ENCODE measurements at regions of chr19 and their contacts with region 1.

Region 1: GRCh38 chr19:10269333-10270179 is 1.4 kb upstream of the ICAM1 start:
- DNase-seq: peak; percentile 81 to 87 (median 85)
- H3K4me3 ChIP-seq: peak overlapping the region; percentile 47 to 82
- H3K4me3 Mint-ChIP-seq: peak overlapping the region; percentile 81 to 91 (median 86)
- H3K27ac ChIP-seq: peak overlapping the region; percentile 88
- H3K27ac Mint-ChIP-seq: peak overlapping the region; percentile 91 to 96 (median 95)
- H3K4me1 ChIP-seq: peaks cover 34% of the 10 kb centered on the region
- H3K4me1 Mint-ChIP-seq: peaks cover 9 to 42% (median 24%) of the 10 kb centered on the region in 4 donors
- H3K27me3 ChIP-seq: no peaks in the 10 kb centered on the region
- H3K27me3 Mint-ChIP-seq: no peaks in the 10 kb centered on the region

Region 2: GRCh38 chr19:10259162-10259905 is 10.2 kb before region 1 on chr19:
- CTCF ChIA-PET with region 1: interaction called, 61 read pairs
- POLR2A ChIA-PET with region 1: interaction called, 36 read pairs
- intact Hi-C with region 1: no loop called
- DNase-seq: peak; percentile 82 to 94 (median 86)
- H3K4me3 ChIP-seq: no peak overlapping the region
- H3K4me3 Mint-ChIP-seq: peak overlapping the region in 1 of 8 donors; percentile 68
- H3K27ac ChIP-seq: peak overlapping the region; percentile 16
- H3K27ac Mint-ChIP-seq: peak overlapping the region in 4 of 7 donors; percentile 17 to 76 (median 54)
- H3K4me1 ChIP-seq: peaks cover 20% of the 10 kb centered on the region
- H3K4me1 Mint-ChIP-seq: peaks cover 5 to 17% (median 8%) of the 10 kb centered on the region in 4 donors
- H3K27me3 ChIP-seq: no peaks in the 10 kb centered on the region
- H3K27me3 Mint-ChIP-seq: no peaks in the 10 kb centered on the region

Region 3: GRCh38 chr19:10292206-10292788 is 22.7 kb after region 1 on chr19:
- CTCF ChIA-PET with region 1: interaction called, 13 read pairs
- POLR2A ChIA-PET with region 1: interaction called, 111 read pairs
- intact Hi-C with region 1: loop called (anchors 1 kb)
- DNase-seq: peak; percentile 49 to 68 (median 55)
- H3K4me3 ChIP-seq: peak overlapping the region; percentile 34 to 58
- H3K4me3 Mint-ChIP-seq: peak overlapping the region; percentile 67 to 89 (median 79)
- H3K27ac ChIP-seq: no peak overlapping the region
- H3K27ac Mint-ChIP-seq: peak overlapping the region in 4 of 7 donors; percentile 37 to 89 (median 68)
- H3K4me1 ChIP-seq: peaks cover 82% of the 10 kb centered on the region
- H3K4me1 Mint-ChIP-seq: peaks cover 36 to 73% (median 56%) of the 10 kb centered on the region in 4 donors
- H3K27me3 ChIP-seq: peaks cover 67% of the 10 kb centered on the region
- H3K27me3 Mint-ChIP-seq: peaks cover 43 to 48% of the 10 kb centered on the region in 2 donors

Region 4: DNA sequence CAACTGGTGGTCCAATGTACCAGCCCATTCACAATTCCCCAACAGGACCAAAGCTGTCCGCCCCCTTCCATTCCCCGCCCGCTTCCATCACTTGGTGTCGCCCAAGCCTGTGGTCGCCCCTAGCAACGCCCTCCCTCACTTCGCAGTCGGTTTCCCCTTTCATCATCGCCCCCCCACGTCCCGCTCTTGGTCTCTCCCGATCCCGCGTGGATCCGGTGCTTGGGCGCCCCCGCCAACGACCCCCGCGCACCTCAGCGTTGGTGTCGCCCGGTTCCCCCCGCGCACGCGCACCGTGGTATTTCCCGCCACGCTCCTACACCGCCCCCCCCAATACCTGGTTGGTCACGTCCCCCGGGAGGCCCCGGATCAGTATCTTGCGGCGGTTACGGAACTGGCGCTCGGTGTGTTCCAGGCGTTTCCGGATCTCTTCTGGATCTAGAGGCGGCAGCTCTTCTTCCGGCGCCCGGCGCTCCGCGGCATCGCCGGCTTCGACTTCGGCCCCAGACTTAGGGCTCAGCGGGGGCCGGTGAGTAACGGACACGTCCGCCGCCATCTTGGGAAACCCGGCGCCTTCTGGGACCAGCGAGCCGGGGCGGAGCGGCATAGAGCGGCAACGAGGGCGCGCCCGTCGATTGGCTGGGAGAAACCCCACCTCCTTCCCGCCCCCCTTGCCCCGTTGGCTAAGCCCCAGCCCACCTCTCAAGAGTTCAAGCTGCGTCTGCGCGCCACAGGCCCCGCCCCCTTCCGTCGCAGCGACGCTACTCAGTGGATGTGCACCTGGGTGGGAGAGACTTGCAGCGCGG is 63.6 kb after region 1 on chr19 and contains the start of gene RAVER1:
- CTCF ChIA-PET with region 1: interaction called, 3 read pairs
- POLR2A ChIA-PET with region 1: interaction called, 33 read pairs
- intact Hi-C with region 1: loop called (anchors 1 kb)
- DNase-seq: peak; percentile 97 to 98 (median 98)
- H3K4me3 ChIP-seq: peak within 1 kb of the TSS; percentile 73 to 89
- H3K4me3 Mint-ChIP-seq: peak within 1 kb of the TSS; percentile 92 to 99 (median 96)
- H3K27ac ChIP-seq: peak within 1 kb of the TSS; percentile 88
- H3K27ac Mint-ChIP-seq: peak within 1 kb of the TSS; percentile 91 to 98 (median 97)
- H3K4me1 ChIP-seq: peaks cover 43% of the 10 kb centered on the region
- H3K4me1 Mint-ChIP-seq: peaks cover 7 to 57% (median 27%) of the 10 kb centered on the region in 4 donors
- H3K27me3 ChIP-seq: no peaks in the 10 kb centered on the region
- H3K27me3 Mint-ChIP-seq: no peaks in the 10 kb centered on the region
- total RNA-seq, gene RAVER1: 46.1 to 56.1 TPM

Region 5: DNA sequence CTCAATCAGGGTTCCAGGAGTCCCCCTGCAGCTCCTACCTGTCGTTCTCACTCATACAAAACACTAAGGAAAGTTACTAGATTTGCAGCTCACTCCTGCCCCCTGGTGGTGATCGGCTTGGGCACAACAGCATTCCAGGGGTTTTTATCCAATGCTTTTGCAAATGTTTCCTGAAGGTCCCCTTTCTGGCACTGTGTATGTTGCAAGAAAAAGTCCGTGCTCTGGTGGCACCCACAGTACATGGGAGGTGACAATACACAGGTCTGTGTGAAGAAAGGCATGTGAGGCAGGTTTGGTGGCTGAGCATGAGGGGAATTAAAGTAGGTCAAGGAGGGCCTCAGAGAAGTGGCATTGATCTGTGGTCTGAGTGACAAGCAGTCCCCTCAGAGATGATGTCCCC is 119.4 kb after region 1 on chr19:
- CTCF ChIA-PET with region 1: interaction called, 235 read pairs
- POLR2A ChIA-PET with region 1: interaction called, 73 read pairs
- intact Hi-C with region 1: loop called (anchors 1 kb)
- DNase-seq: peak; percentile 68 to 78 (median 75)
- H3K4me3 ChIP-seq: no peak overlapping the region
- H3K4me3 Mint-ChIP-seq: no peak overlapping the region
- H3K27ac ChIP-seq: no peak overlapping the region
- H3K27ac Mint-ChIP-seq: peak overlapping the region; percentile 10 to 79 (median 47)
- H3K4me1 ChIP-seq: no peaks in the 10 kb centered on the region
- H3K4me1 Mint-ChIP-seq: peaks cover 5 to 11% (median 6%) of the 10 kb centered on the region in 4 donors
- H3K27me3 ChIP-seq: no peaks in the 10 kb centered on the region
- H3K27me3 Mint-ChIP-seq: no peaks in the 10 kb centered on the region